ENCODE measurements at regions of chr2 and their contacts with region 1.

Region 1: GRCh38 chr2:177332041-177332991 is 60.3 kb upstream of the AGPS start:
- DNase-seq: peak; percentile 73
- H3K4me3 Mint-ChIP-seq: no peak overlapping the region
- H3K27ac Mint-ChIP-seq: no peak overlapping the region
- H3K4me1 Mint-ChIP-seq: peaks cover 8% of the 10 kb centered on the region
- H3K27me3 Mint-ChIP-seq: no peaks in the 10 kb centered on the region
- CTCF ChIP-seq: peak; percentile 60

Region 2: DNA sequence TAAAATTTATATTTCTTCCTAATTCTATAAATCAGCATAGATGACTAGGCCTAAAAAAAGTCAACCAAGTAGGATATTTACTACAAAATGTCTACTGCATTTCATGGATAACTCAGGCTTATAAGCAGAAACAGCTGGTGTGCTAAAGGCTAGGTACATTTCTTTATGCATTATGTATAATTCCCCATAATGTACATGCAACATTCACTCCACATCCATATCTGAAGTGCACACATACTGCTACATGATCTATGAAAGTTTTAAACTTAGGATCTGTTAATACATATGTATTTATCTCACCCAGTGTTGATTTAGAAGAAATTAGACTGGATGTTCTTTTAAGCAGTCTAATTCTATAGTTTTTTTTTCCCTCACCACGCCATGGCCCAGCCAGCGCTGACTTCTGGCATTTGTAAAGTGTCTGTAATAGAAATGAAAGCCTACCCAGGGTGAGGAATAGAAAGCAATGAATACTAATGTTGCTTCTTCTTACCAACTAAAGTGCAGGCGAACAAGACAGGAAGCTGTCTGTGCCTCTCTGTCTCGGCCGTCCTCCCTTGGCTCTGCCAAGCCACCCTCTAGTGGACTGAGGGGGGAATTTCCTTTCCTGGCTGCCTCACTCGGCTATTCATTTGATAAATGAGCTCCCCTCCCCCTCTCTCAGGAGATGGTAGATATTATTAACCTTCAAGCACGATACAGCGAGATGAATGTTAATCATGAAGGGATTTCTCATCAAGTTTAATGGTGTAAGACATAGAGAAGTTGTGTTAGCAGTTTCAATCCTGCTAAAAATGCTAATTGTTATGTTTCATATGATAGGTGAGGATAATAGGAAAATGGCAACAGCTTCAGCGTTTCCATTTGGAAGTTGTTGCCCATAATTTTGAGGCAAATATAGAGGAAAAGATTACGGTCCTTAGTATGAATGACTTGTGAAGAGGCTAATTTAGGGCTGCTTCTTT is 678.6 kb before region 1 on chr2:
- CTCF ChIA-PET with region 1: no interaction called
- POLR2A ChIA-PET with region 1: no interaction called
- intact Hi-C with region 1: loop called (anchors 10 kb)
- DNase-seq: peak; percentile 81
- H3K4me3 Mint-ChIP-seq: no peak overlapping the region
- H3K27ac Mint-ChIP-seq: no peak overlapping the region
- H3K4me1 Mint-ChIP-seq: peaks cover 5% of the 10 kb centered on the region
- H3K27me3 Mint-ChIP-seq: peaks cover 29% of the 10 kb centered on the region
- CTCF ChIP-seq: peak; percentile 73

Region 3: GRCh38 chr2:177296040-177296439 is 36.3 kb before region 1 on chr2:
- CTCF ChIA-PET with region 1: interaction called, 6 read pairs
- POLR2A ChIA-PET with region 1: interaction called, 3 read pairs
- intact Hi-C with region 1: loop called (anchors 5 kb)
- DNase-seq: peak; percentile 42
- H3K4me3 Mint-ChIP-seq: no peak overlapping the region
- H3K27ac Mint-ChIP-seq: no peak overlapping the region
- H3K4me1 Mint-ChIP-seq: no peaks in the 10 kb centered on the region
- H3K27me3 Mint-ChIP-seq: no peaks in the 10 kb centered on the region
- CTCF ChIP-seq: peak; percentile 32

Region 4: DNA sequence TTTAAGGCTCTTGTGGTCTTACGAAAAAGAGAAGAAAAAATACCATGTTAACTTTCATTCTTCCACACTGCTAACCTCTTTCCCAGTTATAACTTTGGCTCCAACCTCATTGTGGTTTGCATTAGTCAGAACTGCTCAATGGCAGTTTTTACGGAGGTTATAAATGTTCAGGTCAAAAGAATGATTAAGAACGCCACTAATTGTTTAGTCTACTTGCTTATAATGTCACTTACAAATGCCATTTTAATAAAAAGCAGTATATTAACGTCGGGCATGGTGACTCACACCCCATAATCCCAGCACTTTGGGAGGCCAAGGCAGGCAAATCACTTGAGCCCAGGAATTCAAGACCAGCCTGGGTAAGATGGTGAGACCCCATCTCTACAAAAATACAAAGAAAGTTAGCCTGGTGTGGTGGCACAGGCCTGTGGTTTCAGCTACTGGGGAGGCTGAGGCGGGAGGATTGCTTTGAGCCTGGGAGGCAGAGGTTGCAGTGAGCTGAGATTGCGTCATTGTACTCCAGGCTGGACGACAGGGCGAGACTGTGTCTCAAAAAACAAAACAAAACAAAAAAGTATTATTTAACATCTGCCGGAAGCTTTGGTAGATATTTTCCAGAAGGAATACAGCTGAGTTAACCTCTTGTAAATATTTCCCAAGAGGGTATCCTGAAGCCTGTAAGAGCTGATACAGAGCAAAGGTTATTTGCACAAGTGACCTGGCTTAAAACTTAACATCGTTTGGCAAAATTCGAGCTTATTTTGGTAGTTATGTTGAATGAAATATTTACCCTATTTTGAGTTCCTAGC is 65.4 kb after region 1 on chr2:
- CTCF ChIA-PET with region 1: interaction called, 44 read pairs
- POLR2A ChIA-PET with region 1: interaction called, 7 read pairs
- intact Hi-C with region 1: no loop called
- DNase-seq: peak; percentile 66
- H3K4me3 Mint-ChIP-seq: peak overlapping the region; percentile 14
- H3K27ac Mint-ChIP-seq: peak overlapping the region; percentile 42
- H3K4me1 Mint-ChIP-seq: peaks cover 47% of the 10 kb centered on the region
- H3K27me3 Mint-ChIP-seq: no peaks in the 10 kb centered on the region
- CTCF ChIP-seq: no peak

Region 5: DNA sequence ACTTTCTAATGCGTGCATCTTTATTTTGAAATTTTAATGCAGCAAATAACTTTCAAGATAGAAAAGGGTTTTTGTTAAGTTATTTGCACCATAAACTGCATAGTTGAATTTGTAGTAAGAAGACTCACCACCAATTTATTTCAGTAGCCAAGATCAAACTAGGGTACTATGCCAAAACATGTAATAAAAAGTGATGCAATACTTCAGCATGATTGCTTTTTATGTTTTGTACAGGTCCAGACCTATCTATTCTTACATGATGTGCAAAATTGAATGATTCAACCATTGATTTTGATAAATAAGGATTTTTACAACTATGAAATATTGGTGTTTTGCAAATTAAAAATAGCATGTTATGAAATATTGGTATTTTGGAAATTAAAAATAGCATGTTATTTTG is 87.0 kb after region 1 on chr2:
- CTCF ChIA-PET with region 1: interaction called, 201 read pairs
- POLR2A ChIA-PET with region 1: interaction called, 52 read pairs
- intact Hi-C with region 1: loop called (anchors 1 kb)
- DNase-seq: peak; percentile 77
- H3K4me3 Mint-ChIP-seq: peak overlapping the region; percentile 44
- H3K27ac Mint-ChIP-seq: peak overlapping the region; percentile 49
- H3K4me1 Mint-ChIP-seq: peaks cover 7% of the 10 kb centered on the region
- H3K27me3 Mint-ChIP-seq: no peaks in the 10 kb centered on the region
- CTCF ChIP-seq: no peak

Region 6: GRCh38 chr2:177552422-177553175 is 220.3 kb after region 1 on chr2:
- CTCF ChIA-PET with region 1: no interaction called
- POLR2A ChIA-PET with region 1: no interaction called
- intact Hi-C with region 1: loop called (anchors 5 kb)
- DNase-seq: peak; percentile 84
- H3K4me3 Mint-ChIP-seq: peak overlapping the region; percentile 95
- H3K27ac Mint-ChIP-seq: peak overlapping the region; percentile 100
- H3K4me1 Mint-ChIP-seq: peaks cover 4% of the 10 kb centered on the region
- H3K27me3 Mint-ChIP-seq: no peaks in the 10 kb centered on the region
- CTCF ChIP-seq: no peak

Region 7: GRCh38 chr2:177724398-177725287 is 392.3 kb after region 1 on chr2:
- CTCF ChIA-PET with region 1: interaction called, 39 read pairs
- POLR2A ChIA-PET with region 1: interaction called, 4 read pairs
- intact Hi-C with region 1: loop called (anchors 1 kb)
- DNase-seq: peak; percentile 58
- H3K4me3 Mint-ChIP-seq: no peak overlapping the region
- H3K27ac Mint-ChIP-seq: no peak overlapping the region
- H3K4me1 Mint-ChIP-seq: no peaks in the 10 kb centered on the region
- H3K27me3 Mint-ChIP-seq: peaks cover 53% of the 10 kb centered on the region
- CTCF ChIP-seq: peak; percentile 86